Activated CD8-positive, alpha-beta memory T cell treated with anti-CD3 and anti-CD28 coated beads, Interleukin-2, amount 10 ng/mL, durations not matched to agents 7 days and 5 days (primary cell): ENCODE measurements at regions of chr21 and their contacts with region 1.

Region 1: GRCh38 chr21:34351786-34352241 is 12.0 kb upstream of the KCNE2 start:
- DNase-seq: peak; percentile 52
- ATAC-seq: peak; percentile 72
- H3K4me3 Mint-ChIP-seq: no peak overlapping the region
- H3K27ac Mint-ChIP-seq: no peak overlapping the region
- H3K4me1 Mint-ChIP-seq: peaks cover 6% of the 10 kb centered on the region
- H3K27me3 Mint-ChIP-seq: peaks cover 24% of the 10 kb centered on the region

Region 2: DNA sequence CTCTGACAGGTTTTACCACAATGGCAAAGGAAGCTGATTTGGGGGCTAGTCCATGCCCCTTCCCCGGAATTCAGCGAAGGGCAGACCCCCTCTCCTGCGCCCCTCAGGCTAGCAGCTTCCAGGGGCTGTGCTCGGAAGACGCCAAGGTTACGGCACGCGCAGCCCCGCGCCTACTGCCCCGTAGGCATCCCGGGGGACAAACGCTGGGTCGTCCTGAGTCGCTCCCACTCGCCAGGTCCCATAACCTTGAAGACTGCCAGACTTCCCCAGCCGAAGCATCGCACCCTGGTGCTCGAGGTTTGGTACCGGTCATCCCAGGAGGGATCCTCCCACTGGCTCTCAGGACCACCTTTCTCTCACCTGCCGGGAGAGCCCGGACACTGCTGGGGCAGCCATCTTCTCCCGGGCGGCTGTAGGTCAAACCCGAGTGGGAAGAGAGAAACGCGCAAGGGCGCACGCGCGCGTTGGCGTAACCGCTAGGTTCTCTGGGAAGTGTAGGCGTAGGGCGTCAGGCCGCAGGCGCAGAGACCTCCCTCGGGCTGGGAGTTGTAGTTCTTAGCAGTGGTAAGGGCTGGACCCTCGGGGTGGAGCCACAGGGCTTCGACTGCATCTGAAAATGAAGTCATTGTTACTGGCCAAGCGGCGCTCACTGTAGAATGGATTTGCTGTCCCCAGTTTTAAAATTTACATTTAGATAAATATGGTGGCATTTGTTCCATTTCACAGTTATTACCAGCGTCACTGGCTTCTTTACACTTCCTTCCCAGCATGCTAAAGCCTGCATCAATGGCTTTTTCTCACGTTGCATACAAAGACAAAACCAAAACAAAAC is 436.2 kb before region 1 on chr21 and contains the start of gene ATP5PO:
- CTCF ChIA-PET with region 1: interaction called, 25 read pairs
- DNase-seq: peak; percentile 99
- ATAC-seq: peak; percentile 100
- H3K4me3 Mint-ChIP-seq: peak within 1 kb of the TSS; percentile 98
- H3K27ac Mint-ChIP-seq: peak within 1 kb of the TSS; percentile 97
- H3K4me1 Mint-ChIP-seq: peaks cover 31% of the 10 kb centered on the region
- H3K27me3 Mint-ChIP-seq: no peaks in the 10 kb centered on the region
- total RNA-seq, gene ATP5PO: 186 to 205 TPM

Region 3: DNA sequence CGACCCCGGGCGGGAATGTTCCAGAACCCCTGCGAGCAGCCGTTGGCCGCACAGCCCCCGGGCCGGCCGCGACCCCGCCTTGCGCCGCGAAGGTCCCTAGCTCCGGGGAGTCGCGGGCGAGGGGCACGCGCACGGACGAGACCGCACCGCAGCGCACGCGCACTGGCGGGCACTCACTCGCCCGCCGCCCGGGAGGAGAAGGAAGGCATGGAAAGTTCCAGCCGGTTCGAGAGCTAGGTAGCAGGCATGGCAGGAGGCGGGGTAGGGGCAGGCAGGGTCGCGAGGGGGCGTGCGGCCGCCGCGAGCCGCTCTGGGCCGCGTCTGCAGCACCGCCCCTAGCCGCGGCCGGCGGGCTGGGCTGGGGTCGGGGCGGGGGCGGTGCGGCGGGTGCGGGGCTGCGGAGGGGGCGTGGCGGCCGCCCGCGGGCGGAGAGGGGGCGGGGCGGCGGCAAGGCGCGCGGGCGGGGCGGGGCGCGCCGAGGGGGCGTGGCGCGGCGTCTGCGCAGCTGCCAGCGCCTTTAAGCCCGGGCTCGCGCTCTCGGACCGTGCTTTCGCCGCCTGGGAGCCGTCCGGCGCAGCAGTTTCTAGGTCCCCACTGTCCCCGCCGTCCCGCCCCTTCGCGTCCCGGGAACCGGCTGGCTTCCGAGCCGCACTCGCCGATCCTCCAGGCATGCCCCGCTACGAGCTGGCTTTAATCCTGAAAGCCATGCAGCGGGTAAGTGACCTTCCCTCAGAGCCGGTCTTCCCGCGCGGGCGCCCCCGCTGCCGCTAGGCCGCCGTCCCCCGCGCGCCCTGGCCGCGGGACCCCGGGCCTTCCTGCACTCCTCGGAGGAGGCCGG is 278.6 kb before region 1 on chr21 and contains the starts of genes MRPS6 and SLC5A3:
- CTCF ChIA-PET with region 1: interaction called, 15 read pairs
- DNase-seq: peak; percentile 79
- ATAC-seq: peak; percentile 80
- H3K4me3 Mint-ChIP-seq: peak within 1 kb of the TSS; percentile 90
- H3K27ac Mint-ChIP-seq: peak within 1 kb of the TSS; percentile 72
- H3K4me1 Mint-ChIP-seq: peaks cover 38% of the 10 kb centered on the region
- H3K27me3 Mint-ChIP-seq: peaks cover 5% of the 10 kb centered on the region
- total RNA-seq, gene MRPS6: 82.9 to 124 TPM
- total RNA-seq, gene SLC5A3: 29.2 to 34.7 TPM

Region 4: GRCh38 chr21:34187935-34188334 is 163.9 kb before region 1 on chr21:
- CTCF ChIA-PET with region 1: no interaction called
- DNase-seq: no peak
- ATAC-seq: no peak
- H3K4me3 Mint-ChIP-seq: no peak overlapping the region
- H3K27ac Mint-ChIP-seq: no peak overlapping the region
- H3K4me1 Mint-ChIP-seq: peaks cover 20% of the 10 kb centered on the region
- H3K27me3 Mint-ChIP-seq: no peaks in the 10 kb centered on the region

Region 5: DNA sequence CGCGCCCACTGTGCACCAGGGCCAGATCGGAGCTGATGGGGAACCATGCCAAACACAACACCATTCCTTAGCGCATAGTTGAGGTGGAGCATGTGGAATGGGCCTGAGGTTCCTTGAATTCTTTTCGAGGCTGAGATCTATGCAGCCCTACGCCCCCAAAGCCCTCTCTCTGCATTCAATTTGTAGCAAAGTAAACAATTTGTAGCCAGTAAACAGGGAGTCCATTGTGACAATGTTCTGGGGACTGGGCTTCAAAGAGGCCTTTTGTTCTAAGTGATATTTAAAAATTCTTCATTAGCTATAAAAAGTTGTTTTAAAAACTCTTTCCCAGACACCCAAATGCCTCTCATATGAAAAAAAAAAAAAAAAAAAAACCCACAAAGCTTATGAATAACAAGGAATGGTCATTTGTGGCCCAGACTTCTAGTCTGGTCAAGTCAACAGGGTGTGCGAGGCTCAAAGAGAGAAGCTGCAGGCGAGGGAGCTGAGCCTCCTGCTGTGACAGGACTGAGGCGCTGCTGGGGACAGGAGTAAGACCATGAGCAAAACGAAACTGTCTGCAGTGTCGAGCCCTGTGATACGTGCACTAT is 18.6 kb before region 1 on chr21:
- CTCF ChIA-PET with region 1: interaction called, 11 read pairs
- DNase-seq: no peak
- ATAC-seq: no peak
- H3K4me3 Mint-ChIP-seq: no peak overlapping the region
- H3K27ac Mint-ChIP-seq: no peak overlapping the region
- H3K4me1 Mint-ChIP-seq: peaks cover 7% of the 10 kb centered on the region
- H3K27me3 Mint-ChIP-seq: peaks cover 2% of the 10 kb centered on the region

Region 6: GRCh38 chr21:34362136-34362444 is 10.3 kb after region 1 on chr21:
- CTCF ChIA-PET with region 1: interaction called, 19 read pairs
- DNase-seq: no peak
- ATAC-seq: no peak
- H3K4me3 Mint-ChIP-seq: no peak overlapping the region
- H3K27ac Mint-ChIP-seq: no peak overlapping the region
- H3K4me1 Mint-ChIP-seq: peaks cover 7% of the 10 kb centered on the region
- H3K27me3 Mint-ChIP-seq: peaks cover 42% of the 10 kb centered on the region

Region 7: GRCh38 chr21:34579411-34579810 is 227.6 kb after region 1 on chr21:
- CTCF ChIA-PET with region 1: no interaction called
- DNase-seq: no peak
- ATAC-seq: no peak
- H3K4me3 Mint-ChIP-seq: no peak overlapping the region
- H3K27ac Mint-ChIP-seq: no peak overlapping the region
- H3K4me1 Mint-ChIP-seq: peaks cover 16% of the 10 kb centered on the region
- H3K27me3 Mint-ChIP-seq: no peaks in the 10 kb centered on the region

Region 8: DNA sequence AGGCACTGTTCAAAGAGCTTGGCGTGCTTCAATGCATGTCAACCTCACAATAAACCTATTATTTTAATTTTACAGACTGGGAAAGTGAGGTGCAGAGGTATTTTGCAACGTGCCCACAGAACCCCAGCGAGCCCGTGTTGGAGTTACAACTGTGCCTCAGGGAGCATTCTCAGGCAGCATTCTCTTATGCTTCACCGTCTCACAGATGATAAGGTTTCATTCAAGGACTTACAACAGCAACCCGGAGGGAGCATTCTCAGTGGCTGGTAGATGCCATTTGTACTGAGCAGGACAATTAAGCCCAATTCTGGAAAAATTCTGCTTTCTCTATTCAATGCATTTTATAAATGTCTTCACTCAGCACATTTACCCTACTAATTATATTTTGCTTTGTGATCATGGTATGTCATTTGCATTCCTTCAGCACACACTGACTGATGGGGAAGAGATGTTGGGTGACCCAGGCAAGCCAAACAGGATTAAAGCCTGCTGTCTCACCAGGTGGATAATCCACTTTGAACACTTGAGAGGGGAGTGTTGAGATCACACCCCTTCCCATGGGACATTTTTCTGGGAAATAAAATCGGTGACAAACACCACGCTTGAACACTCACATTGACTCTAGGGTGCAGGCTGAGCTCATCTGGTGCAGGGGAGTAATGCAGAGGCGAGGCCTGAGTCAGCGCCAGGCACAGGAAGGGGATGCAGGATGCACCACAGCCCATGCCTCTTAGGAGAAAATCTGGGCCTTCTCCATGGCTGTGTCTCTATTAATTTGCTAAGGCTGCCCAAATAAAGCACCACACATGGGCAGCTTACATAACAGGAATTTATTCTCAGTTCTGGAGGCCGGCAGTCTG is 430.9 kb after region 1 on chr21:
- CTCF ChIA-PET with region 1: no interaction called
- DNase-seq: no peak
- ATAC-seq: no peak
- H3K4me3 Mint-ChIP-seq: no peak overlapping the region
- H3K27ac Mint-ChIP-seq: no peak overlapping the region
- H3K4me1 Mint-ChIP-seq: peaks cover 3% of the 10 kb centered on the region
- H3K27me3 Mint-ChIP-seq: no peaks in the 10 kb centered on the region